ENCODE measurements at regions of chr19 and their contacts with region 1.

Region 1: DNA sequence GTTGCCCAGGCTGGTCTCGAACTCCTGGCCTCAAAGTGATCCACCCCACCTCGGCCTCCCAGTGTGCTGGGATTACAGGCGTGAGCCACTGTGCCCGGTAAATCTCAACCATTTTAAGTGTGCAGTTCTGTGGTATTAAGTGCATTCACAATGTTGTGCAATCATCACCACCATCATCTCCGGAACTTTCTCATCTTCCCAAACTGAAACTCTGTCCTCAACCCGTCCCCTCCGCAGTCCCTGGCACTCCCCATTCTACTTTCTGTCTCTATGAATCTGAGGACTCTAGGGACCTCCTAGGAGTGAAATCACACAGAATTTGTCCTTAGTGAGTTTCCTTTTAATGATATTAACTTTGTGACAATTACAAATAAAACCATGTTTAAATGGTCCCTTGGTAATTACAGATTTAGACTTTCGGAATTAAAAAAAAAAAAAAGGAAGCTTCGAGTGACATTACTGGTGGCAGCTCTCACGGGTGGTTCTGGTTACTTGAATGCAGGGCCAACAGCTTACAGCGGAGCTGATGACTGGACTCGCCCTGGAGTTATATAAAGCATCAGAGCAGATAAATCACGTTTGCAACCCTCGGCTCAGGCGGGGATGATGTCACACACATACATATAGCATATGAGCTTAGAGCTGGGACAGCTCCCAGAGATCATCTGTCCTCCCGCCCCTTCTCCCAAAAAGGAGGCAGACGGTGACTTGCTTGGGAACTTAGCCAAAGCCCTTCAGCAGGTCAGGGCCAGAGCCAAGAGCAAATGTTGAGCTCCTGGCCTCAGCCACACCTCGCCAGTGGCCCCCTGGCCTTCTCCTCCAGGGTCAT is 89.8 kb downstream of the ZNF557 start:
- DNase-seq: peak; percentile 59 to 88
- ATAC-seq: peak; percentile 88 to 99 (median 97)
- H3K4me3 ChIP-seq: peak overlapping the region in 3 of 10 donors; percentile 3 to 29 (median 9)
- H3K27ac ChIP-seq: peak overlapping the region; percentile 46 to 93 (median 88)
- H3K4me1 ChIP-seq: peaks cover 0 to 32% (median 16%) of the 10 kb centered on the region in 9 donors
- H3K27me3 ChIP-seq: no peaks in the 10 kb centered on the region
- CTCF ChIP-seq: no peak

Region 2: DNA sequence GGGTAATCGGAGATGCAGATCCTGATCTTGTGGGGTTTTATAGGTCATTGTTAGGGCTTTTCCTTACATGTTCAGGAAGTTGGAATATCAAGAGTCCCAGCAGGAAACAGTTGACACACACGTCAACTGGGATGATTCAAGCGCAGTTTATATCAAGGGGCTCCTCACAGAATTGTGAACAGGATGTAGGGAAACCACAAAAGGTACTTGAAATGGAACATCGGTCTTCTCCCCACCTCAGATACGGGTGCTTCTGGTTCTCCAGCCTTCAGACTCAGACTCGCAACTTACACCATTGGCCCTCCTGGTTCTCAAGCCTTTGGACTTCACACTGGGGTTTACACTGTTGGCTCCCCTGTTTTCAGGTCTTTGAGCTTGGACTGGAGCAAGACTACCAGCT is 70.3 kb before region 1 on chr19:
- intact Hi-C with region 1: no loop called
- DNase-seq: no peak
- ATAC-seq: no peak
- H3K4me3 ChIP-seq: no peak overlapping the region
- H3K27ac ChIP-seq: no peak overlapping the region
- H3K4me1 ChIP-seq: no peaks in the 10 kb centered on the region
- H3K27me3 ChIP-seq: no peaks in the 10 kb centered on the region
- CTCF ChIP-seq: no peak

Region 3: GRCh38 chr19:7197760-7198696 is 38.7 kb after region 1 on chr19:
- intact Hi-C with region 1: loop called in 2 of 10 experiments (anchors 5 kb)
- DNase-seq: peak; percentile 91 to 93
- ATAC-seq: peak; percentile 92 to 95 (median 94)
- H3K4me3 ChIP-seq: peak overlapping the region; percentile 49 to 90 (median 74)
- H3K27ac ChIP-seq: peak overlapping the region; percentile 64 to 92 (median 84)
- H3K4me1 ChIP-seq: peaks cover 5 to 35% (median 19%) of the 10 kb centered on the region in 9 donors
- H3K27me3 ChIP-seq: no peaks in the 10 kb centered on the region
- CTCF ChIP-seq: peak in 6 of 9 donors; percentile 12 to 34 (median 23)

Measured in heart right ventricle (tissue), 16 donors.